ENCODE measurements at regions of chr5 and their contacts with region 1.

Region 1: GRCh38 chr5:115841382-115842088 is at the starts of genes AP3S1 and ATG12:
- DNase-seq: peak; percentile 91
- ATAC-seq: peak; percentile 77
- H3K4me3 ChIP-seq: peak within 1 kb of the TSS; percentile 83 to 87
- H3K27ac ChIP-seq: peak within 1 kb of the TSS; percentile 96
- H3K4me1 ChIP-seq: peaks cover 33 to 66% of the 10 kb centered on the region in 2 experiments
- H3K27me3 ChIP-seq: no peaks in the 10 kb centered on the region
- CTCF ChIP-seq: no peak
- POLR2A ChIP-seq: peak; percentile 58
- RAD21 ChIP-seq: no peak
- total RNA-seq, gene AP3S1: 432 TPM
- total RNA-seq, gene ATG12: 270 TPM

Region 2: DNA sequence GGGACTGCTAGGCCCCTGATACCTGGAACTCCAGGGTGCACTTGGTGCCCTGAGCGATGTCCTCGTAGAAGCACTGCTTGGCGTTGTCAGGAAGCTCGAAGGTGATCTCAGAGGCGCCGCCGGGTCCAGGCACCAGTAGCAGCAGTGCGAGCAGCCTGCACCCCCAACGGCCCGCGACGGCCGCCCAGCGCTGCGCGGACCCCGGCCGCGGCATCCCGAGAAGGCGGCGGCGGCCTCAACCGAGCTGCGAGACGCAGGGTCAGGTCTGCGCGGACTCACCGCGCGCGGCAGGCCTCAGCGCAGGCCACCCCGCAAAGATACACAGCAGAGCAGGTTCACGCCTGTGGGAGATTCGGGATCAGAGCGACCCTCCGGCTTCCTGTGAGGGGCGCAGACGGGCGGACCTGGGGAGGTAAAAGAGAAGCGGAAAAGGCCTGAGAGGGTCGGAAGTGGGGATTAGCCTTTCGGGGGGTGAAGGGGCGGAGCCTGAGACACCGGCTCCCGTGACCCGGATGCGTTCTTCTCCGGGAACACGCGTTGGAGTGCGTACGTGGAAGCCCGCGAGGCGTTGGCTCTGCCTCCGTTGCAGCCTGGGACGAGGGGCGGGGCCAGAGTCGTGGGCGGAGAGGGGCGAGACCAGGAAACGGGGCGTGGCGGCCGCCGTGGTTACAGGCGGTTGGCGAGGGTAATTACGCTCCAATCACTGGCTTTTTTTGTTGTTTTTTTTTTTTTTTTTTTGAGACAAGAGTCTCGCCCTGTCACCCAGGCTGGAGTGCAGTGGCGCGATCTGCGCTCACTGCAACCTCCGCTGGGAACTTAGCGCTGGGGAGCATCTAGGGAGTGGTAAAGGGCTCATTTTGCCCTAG is 215.7 kb before region 1 on chr5 and contains the start of gene TMED7:
- CTCF ChIA-PET with region 1: no interaction called
- POLR2A ChIA-PET with region 1: no interaction called
- RAD21 ChIA-PET with region 1: no interaction called
- intact Hi-C with region 1: loop called (anchors 1 kb)
- DNase-seq: peak; percentile 96
- ATAC-seq: peak; percentile 95
- H3K4me3 ChIP-seq: peak within 1 kb of the TSS; percentile 92 to 94
- H3K27ac ChIP-seq: peak within 1 kb of the TSS; percentile 84
- H3K4me1 ChIP-seq: peaks cover 6 to 26% of the 10 kb centered on the region in 2 experiments
- H3K27me3 ChIP-seq: no peaks in the 10 kb centered on the region
- CTCF ChIP-seq: no peak
- POLR2A ChIP-seq: peak; percentile 92
- RAD21 ChIP-seq: no peak
- total RNA-seq, gene TMED7: 167 TPM

Region 3: GRCh38 chr5:115686051-115686737 is 155.3 kb before region 1 on chr5:
- CTCF ChIA-PET with region 1: no interaction called
- POLR2A ChIA-PET with region 1: no interaction called
- RAD21 ChIA-PET with region 1: no interaction called
- intact Hi-C with region 1: no loop called
- DNase-seq: no peak
- ATAC-seq: no peak
- H3K4me3 ChIP-seq: no peak overlapping the region
- H3K27ac ChIP-seq: no peak overlapping the region
- H3K4me1 ChIP-seq: no peaks in the 10 kb centered on the region
- H3K27me3 ChIP-seq: no peaks in the 10 kb centered on the region
- CTCF ChIP-seq: no peak
- POLR2A ChIP-seq: no peak
- RAD21 ChIP-seq: no peak

Region 4: GRCh38 chr5:116032094-116032517 is 190.6 kb after region 1 on chr5 and contains the start of gene ARL14EPL:
- CTCF ChIA-PET with region 1: no interaction called
- POLR2A ChIA-PET with region 1: interaction called, 3 read pairs
- RAD21 ChIA-PET with region 1: no interaction called
- intact Hi-C with region 1: loop called (anchors 2 kb)
- DNase-seq: peak; percentile 99
- ATAC-seq: peak; percentile 97
- H3K4me3 ChIP-seq: peak within 1 kb of the TSS in 1 of 2 experiments; percentile 3; a peak in 1 of 4 replicates
- H3K27ac ChIP-seq: peak within 1 kb of the TSS; percentile 52
- H3K4me1 ChIP-seq: peaks cover 21 to 61% of the 10 kb centered on the region in 2 experiments
- H3K27me3 ChIP-seq: no peaks in the 10 kb centered on the region
- CTCF ChIP-seq: peak in 2 of 3 experiments; percentile 40 to 56; a peak in 3 of 6 replicates
- POLR2A ChIP-seq: no peak
- RAD21 ChIP-seq: peak; percentile 94
- total RNA-seq, gene ARL14EPL: 22.9 TPM